GM18951 (cell line): ENCODE measurements at regions of chr2 and their contacts with region 1.

Region 1: DNA sequence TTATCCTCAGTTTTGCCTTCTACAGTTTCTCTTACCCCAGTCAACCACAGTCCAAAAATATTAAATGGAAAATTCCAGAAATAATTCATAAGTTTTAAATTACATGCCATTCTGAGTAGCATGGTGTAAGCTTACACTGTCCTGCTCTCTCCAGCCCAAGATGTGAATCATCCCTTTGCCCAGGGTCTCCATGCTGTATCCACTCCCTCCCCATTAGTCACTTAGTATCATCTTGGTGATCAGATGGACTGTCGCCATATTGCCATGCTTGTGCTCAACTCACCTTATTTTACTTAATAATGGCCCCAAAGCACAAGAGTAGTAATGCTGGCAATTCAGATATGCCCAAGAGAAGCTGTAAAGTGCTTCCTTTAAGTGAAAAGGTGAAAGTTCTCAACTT is 18.5 kb upstream of the CCNT2 start:
- POLR2A ChIP-seq: no peak

Region 2: DNA sequence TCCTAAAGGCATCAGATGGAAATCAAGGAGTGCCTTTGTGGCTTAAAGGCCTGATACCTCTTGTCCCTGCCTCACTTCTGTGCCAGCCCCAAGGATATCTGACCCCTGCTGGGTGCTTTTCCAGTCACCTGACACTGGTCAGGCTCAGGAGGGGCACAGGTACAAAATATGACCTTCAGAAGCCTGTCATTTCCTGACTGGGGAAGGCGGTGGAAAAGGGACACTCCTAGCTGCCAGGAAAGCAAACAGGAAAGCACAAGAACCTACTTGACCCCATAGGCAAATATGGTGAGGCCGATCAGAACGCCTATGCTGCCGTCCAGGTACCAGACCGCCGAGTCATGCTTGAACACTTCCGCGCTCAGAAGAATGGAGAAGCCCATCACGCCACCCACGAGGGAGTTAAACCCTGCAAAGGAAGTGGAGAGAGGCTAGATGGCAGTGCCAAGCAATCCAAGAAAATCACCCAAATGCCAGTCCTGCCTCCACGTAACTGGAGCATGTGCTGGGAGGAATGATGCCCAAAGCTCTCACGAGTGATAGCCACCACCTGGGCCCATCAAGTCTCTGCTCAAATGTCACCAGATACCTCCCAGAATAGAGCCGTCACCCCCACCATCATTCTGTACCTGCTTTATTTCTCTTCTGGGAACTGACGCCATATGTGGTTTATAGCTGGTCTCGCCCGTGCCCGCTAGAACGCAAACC is 442.2 kb before region 1 on chr2:
- in situ Hi-C with region 1: loop called (anchors 5 kb)
- POLR2A ChIP-seq: no peak

Region 3: GRCh38 chr2:135086222-135086621 is 186.1 kb after region 1 on chr2:
- in situ Hi-C with region 1: no loop called
- POLR2A ChIP-seq: no peak

Region 4: DNA sequence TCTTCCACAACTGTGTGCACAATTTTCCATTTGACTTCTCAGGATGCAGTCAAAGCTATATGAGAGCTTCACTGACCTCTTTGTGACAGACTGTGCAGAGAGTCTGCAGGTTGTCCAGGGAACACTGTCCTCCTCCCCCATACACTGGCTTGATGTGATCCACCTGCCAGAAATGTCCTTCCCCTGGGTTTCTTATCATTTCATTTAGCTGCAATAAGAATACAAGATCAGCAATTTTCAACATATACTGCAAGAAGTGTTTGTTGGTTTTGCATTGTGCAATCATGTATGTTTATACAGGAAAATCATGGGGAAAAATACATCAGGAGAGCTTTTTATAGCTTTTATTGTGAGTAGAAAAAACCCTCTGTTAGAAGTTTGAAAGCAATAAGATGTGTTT is 302.6 kb after region 1 on chr2:
- in situ Hi-C with region 1: no loop called
- POLR2A ChIP-seq: no peak

Region 5: DNA sequence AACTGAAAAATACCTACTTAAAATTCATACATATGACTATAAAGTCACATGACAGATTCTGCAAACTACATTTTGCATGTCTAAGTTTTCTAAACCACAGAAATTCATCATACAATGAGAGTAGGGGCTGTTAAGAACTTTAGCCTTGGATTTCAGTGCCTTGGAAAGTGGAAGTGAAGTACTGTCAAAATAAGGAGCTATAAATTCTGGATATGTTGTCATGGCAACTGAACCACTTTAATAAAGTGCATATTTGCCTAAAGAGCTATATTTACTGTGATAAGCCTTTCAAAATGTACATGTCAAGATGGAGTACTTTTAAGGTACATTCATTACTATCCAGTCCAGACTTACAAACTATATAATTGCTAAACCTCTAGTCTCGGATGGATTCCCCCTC is 379.1 kb after region 1 on chr2:
- in situ Hi-C with region 1: no loop called
- POLR2A ChIP-seq: no peak